ENCODE measurements at regions of chr17 and their contacts with region 1.

Region 1: GRCh38 chr17:76121932-76122430 is 18.4 kb upstream of the EXOC7 start:
- DNase-seq: peak in 3 of 10 donors; percentile 34 to 84 (median 73)

Region 2: DNA sequence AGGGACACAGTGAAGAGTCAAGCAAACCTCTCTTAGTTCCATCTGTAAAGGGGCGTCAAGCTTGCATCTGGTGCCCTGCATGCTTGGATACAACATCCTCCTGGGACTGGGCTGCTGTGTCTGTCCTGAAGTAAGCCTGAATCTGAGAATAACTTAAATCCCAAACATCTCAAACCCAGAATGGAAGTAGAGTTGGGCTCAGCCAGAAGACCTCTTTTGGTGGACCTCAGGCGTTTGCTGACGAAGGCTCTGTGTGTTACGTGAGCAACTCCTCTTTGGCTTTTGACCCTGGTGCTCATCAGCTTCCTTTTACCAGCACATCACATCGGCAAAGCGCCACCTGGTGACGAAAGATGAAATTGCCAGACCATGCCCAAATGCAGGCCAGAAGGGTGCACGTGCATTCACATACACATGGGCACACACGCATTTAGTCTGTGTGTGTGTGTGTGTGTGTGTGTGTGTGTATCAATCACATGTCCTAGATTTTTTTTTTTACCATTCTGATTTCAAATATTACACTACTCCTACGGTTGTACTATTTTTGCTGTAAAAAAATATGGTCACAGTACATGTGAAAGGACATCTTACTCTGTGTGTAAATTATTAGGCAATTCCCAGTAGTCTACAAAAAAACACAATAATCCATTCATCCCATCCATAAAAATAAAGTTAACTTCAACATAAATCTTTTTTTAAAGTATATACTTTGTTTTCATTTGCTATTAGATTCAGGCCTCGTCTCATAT is 60.2 kb after region 1 on chr17:
- intact Hi-C with region 1: loop called (anchors 1 kb)
- DNase-seq: peak; percentile 69 to 98 (median 86)